GM10248 (cell line): ENCODE measurements at regions of chr17 and their contacts with region 1.

Region 1: GRCh38 chr17:77460514-77461046 is 319.8 kb downstream of the SEC14L1 start:
- DNase-seq: no peak
- CTCF ChIP-seq: no peak

Region 2: GRCh38 chr17:77400445-77400870 is 60.1 kb before region 1 on chr17:
- CTCF ChIA-PET with region 1: no interaction called
- POLR2A ChIA-PET with region 1: no interaction called
- DNase-seq: peak; percentile 82
- CTCF ChIP-seq: peak; percentile 78

Region 3: DNA sequence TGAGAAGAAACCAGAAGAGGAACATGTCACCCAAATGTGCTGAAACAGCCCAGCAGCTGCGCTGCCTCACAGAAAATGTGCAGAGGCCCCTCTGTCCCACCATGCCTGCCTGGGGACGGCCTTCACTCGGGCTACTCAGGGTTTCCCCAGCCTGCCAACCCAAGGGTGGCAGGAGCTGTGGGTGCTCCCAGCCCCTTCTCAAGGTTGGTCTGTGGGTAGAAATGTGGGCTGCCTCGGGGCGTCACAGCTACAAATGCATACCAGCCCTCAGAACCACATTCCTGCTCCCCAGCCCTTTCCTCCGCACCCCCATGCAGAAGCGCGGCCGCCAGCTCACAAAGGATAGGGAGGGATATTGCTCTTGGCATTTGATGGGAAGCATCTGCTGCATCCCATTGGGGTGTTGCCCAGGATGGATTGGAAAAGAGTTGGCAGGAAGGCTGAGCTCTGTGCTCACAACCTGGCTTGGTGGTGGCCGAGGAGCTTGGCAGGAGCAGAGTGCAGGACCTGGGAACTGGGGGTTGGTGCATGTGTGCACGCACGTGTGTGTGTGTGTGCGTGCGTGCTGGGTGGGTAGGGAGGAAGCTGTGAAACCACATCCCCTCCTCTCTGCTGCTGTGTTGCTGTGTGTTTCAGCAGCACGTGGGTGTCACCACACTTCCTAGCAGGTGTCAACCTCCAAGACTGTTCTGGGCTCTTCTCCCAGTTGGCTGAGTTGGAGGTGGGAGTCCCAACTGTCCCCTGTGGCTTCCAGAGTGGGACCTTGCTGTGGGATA is 15.4 kb before region 1 on chr17:
- CTCF ChIA-PET with region 1: interaction called, 17 read pairs
- POLR2A ChIA-PET with region 1: interaction called, 10 read pairs
- DNase-seq: peak; percentile 75
- CTCF ChIP-seq: no peak